ENCODE measurements at regions of chr7 and their contacts with region 1.

Region 1: GRCh38 chr7:40033826-40034225 is 83.8 kb downstream of the CDK13 start:
- DNase-seq: no peak
- H3K4me3 Mint-ChIP-seq: no peak overlapping the region
- H3K27ac Mint-ChIP-seq: no peak overlapping the region
- H3K4me1 Mint-ChIP-seq: peaks cover 7% of the 10 kb centered on the region
- H3K27me3 Mint-ChIP-seq: no peaks in the 10 kb centered on the region

Region 2: GRCh38 chr7:39911167-39911566 is 122.7 kb before region 1 on chr7:
- CTCF ChIA-PET with region 1: no interaction called
- POLR2A ChIA-PET with region 1: interaction called, 10 read pairs
- DNase-seq: no peak
- H3K4me3 Mint-ChIP-seq: no peak overlapping the region
- H3K27ac Mint-ChIP-seq: no peak overlapping the region
- H3K4me1 Mint-ChIP-seq: peaks cover 10% of the 10 kb centered on the region
- H3K27me3 Mint-ChIP-seq: peaks cover 4% of the 10 kb centered on the region

Region 3: DNA sequence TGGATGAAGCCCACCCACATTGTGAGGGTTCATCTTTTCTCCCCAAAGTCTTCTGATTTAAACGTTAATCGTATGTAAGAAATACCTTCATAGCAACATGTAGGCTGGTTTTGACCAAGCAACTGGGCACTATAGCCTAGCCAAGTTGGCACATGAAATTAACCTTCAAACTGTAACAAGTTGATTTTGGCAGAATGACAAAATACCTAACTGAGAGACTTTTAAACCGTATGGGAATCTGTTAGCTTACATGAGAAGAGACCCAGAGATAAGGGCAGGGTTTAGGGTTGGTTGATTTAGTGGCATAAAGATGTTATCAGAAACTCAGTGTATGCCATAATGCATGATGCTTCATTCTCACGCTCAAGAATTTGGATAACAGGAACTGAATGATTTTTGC is 14.3 kb before region 1 on chr7:
- CTCF ChIA-PET with region 1: no interaction called
- POLR2A ChIA-PET with region 1: no interaction called
- DNase-seq: no peak
- H3K4me3 Mint-ChIP-seq: no peak overlapping the region
- H3K27ac Mint-ChIP-seq: no peak overlapping the region
- H3K4me1 Mint-ChIP-seq: peaks cover 20% of the 10 kb centered on the region
- H3K27me3 Mint-ChIP-seq: no peaks in the 10 kb centered on the region